Activated CD8-positive, alpha-beta T cell treated with anti-CD3 and anti-CD28 coated beads for 36 hours (primary cell): ENCODE measurements at regions of chr9 and their contacts with region 1.

Region 1: GRCh38 chr9:75148561-75148960 is 60.2 kb downstream of the OSTF1 start:
- DNase-seq: peak; percentile 52
- ATAC-seq: peak; percentile 58
- H3K4me3 Mint-ChIP-seq: no peak overlapping the region
- H3K27ac Mint-ChIP-seq: peak overlapping the region; percentile 91
- H3K4me1 Mint-ChIP-seq: peaks cover 70% of the 10 kb centered on the region
- H3K27me3 Mint-ChIP-seq: no peaks in the 10 kb centered on the region
- CTCF ChIP-seq: no peak

Region 2: DNA sequence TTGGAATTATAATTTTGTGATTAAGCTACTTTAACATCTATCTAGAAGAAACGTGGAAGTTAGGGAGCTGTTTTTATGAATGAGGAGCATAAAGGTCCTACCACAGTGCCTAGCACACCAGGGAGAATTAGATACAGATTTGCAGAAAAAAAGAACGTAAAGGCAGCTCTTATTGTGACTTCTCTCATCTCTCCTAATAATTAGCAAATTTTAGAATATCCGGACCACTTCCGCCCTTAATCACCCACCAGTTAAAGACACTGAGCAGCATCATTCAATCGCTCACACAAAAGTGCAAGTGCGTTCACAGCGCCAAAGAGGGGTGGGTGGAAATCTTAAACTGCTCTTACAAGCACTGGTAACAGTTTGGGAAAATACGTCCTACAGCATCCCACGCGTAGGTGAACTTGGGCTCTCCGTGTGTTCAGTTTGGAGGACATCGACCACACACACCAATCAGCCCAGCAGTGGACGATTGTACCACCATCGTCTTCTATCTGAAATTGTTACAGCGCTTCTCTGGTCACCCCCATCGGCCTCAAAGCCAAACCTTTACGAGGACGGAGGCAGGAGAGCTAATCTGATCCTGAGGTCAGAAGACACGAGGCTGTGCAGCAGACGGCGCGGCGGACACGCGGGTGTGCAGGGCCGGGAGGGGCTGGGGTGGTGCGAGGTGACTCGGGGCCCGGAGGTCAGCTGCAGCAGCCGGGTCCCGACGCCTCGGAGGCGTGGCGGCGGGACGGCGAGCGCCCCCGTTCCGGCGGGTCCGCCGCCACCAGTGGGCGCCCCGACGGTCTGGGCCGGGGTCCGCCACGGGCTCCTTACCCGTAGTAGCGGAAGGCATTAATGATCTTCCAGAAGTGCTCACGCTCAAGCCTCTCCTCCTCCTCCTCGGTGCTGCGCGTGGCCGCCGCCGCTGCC is 121.1 kb before region 1 on chr9:
- CTCF ChIA-PET with region 1: no interaction called
- POLR2A ChIA-PET with region 1: interaction called, 3 read pairs
- intact Hi-C with region 1: loop called (anchors 5 kb)
- DNase-seq: peak; percentile 66
- ATAC-seq: peak; percentile 29
- H3K4me3 Mint-ChIP-seq: peak overlapping the region; percentile 99
- H3K27ac Mint-ChIP-seq: peak overlapping the region; percentile 97
- H3K4me1 Mint-ChIP-seq: peaks cover 36% of the 10 kb centered on the region
- H3K27me3 Mint-ChIP-seq: no peaks in the 10 kb centered on the region
- CTCF ChIP-seq: peak; percentile 15

Region 3: DNA sequence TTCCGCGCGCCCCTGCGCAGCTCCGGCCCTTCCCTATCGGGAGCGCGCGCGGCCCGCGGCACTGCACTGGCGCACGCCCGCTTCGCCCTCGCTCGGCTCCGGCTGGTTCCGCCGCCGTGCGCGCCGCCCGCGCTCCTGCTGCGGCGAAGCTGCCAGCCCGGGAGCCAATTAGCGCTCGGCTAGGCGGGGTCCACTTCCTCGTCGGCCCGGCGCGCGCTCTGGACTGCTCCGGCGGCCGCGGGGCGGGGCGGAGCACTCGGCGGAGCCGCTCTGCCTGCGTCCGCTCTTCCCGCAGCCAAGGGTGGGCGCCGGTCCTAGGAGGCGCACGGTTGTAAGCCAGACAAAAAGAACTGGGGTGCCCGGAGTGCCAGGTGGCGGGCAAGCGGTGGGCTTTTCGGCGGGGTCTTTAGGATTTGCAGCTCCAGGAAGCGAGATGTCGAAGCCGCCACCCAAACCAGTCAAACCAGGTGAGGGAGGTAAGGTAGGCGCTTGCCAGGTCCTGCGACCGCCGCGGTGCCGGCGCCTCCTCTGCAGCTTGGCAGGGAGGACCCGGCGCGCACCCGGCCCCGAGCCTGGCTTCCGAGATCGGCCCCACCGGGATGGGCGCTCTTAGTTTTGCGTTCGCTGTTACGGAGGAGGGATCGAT is 60.2 kb before region 1 on chr9 and contains the start of gene OSTF1:
- CTCF ChIA-PET with region 1: interaction called, 5 read pairs
- POLR2A ChIA-PET with region 1: interaction called, 23 read pairs
- intact Hi-C with region 1: loop called (anchors 5 kb)
- DNase-seq: peak; percentile 94
- ATAC-seq: peak; percentile 86
- H3K4me3 Mint-ChIP-seq: peak within 1 kb of the TSS; percentile 94
- H3K27ac Mint-ChIP-seq: peak within 1 kb of the TSS; percentile 97
- H3K4me1 Mint-ChIP-seq: peaks cover 61% of the 10 kb centered on the region
- H3K27me3 Mint-ChIP-seq: no peaks in the 10 kb centered on the region
- CTCF ChIP-seq: no peak
- total RNA-seq, gene OSTF1: 52.2 to 55.3 TPM

Region 4: GRCh38 chr9:75138260-75139040 is 10.1 kb before region 1 on chr9:
- CTCF ChIA-PET with region 1: interaction called, 9 read pairs
- POLR2A ChIA-PET with region 1: interaction called, 10 read pairs
- intact Hi-C with region 1: no loop called
- DNase-seq: peak; percentile 25
- ATAC-seq: peak; percentile 78
- H3K4me3 Mint-ChIP-seq: no peak overlapping the region
- H3K27ac Mint-ChIP-seq: peak overlapping the region; percentile 81
- H3K4me1 Mint-ChIP-seq: peaks cover 47% of the 10 kb centered on the region
- H3K27me3 Mint-ChIP-seq: no peaks in the 10 kb centered on the region
- CTCF ChIP-seq: no peak

Region 5: GRCh38 chr9:75185585-75186170 is 37.1 kb after region 1 on chr9:
- CTCF ChIA-PET with region 1: interaction called, 13 read pairs
- POLR2A ChIA-PET with region 1: no interaction called
- intact Hi-C with region 1: no loop called
- DNase-seq: peak; percentile 65
- ATAC-seq: peak; percentile 90
- H3K4me3 Mint-ChIP-seq: no peak overlapping the region
- H3K27ac Mint-ChIP-seq: no peak overlapping the region
- H3K4me1 Mint-ChIP-seq: peaks cover 18% of the 10 kb centered on the region
- H3K27me3 Mint-ChIP-seq: no peaks in the 10 kb centered on the region
- CTCF ChIP-seq: peak; percentile 77

Region 6: DNA sequence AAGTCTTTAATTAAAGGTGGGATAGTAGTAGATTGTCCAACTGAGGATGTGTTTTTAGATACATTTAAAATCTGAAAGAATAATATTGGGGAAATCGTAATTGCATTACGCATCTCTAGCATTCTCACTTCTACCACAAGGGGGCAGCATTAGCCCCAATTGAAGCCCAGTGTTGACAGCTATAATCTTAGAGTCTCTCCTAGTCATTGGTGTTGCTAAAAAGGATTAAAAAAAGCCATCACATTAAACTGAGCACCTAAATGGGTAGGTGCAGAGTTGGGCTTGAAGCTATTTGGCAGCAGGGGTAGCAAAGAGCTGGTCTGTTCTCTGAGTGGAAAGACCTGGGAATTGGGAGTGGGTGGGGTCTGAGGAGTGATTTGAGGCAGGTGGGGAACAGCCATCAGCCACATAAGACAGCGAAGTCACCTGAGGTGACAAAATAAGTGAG is 117.0 kb after region 1 on chr9:
- CTCF ChIA-PET with region 1: no interaction called
- POLR2A ChIA-PET with region 1: no interaction called
- intact Hi-C with region 1: no loop called
- DNase-seq: peak; percentile 68
- ATAC-seq: peak; percentile 64
- H3K4me3 Mint-ChIP-seq: no peak overlapping the region
- H3K27ac Mint-ChIP-seq: no peak overlapping the region
- H3K4me1 Mint-ChIP-seq: no peaks in the 10 kb centered on the region
- H3K27me3 Mint-ChIP-seq: no peaks in the 10 kb centered on the region
- CTCF ChIP-seq: peak; percentile 80